Psoas muscle (tissue), 8 donors: ENCODE measurements at regions of chr22 and their contacts with region 1.

Region 1: DNA sequence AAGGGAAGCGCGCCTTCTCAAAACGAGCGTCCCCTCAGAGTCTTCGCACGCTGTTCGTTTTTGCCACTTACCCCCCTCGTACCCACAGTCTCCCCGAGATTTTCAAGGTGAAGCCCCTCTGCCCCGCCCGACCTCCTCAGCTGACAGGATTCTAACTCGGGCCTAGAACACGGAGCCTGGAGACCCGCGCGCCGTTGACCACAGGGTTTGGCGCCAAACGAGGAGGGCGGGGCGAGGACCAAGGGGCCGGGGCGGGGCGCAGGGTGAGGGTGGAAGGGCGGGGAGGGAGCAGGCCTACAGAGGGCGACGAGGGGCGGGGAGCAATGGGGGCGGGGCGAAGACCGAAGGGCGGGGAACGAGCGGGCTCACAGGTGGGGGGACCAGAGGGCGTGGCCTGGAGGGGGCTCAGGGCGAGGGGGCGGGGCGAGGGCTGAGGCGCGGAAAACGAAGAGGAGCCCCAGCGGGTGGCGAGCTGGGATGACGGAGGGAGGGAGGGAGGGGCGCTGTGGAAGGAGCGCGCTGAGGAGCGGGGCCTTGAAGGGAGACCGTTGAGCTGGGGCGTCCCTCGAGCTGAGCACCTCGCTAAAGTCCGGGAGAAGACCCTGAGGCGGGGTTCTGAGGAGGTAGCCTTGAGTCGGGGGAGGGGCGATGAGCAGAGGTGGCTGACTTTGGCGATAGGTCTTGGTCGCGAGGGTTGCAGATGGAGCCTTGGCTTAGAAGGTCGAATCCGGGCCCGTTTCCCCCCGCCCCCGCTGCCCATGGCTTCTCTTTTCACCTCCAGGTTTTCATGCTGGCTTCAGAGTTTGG is at the start of gene DMC1:
- DNase-seq: peak; percentile 94 to 96
- ATAC-seq: peak; percentile 96 to 98 (median 97)
- H3K4me3 ChIP-seq: peak within 1 kb of the TSS; percentile 78
- H3K27ac ChIP-seq: peak within 1 kb of the TSS; percentile 61
- H3K4me1 ChIP-seq: peaks cover 9% of the 10 kb centered on the region
- H3K27me3 ChIP-seq: no peaks in the 10 kb centered on the region
- CTCF ChIP-seq: no peak
- total RNA-seq, gene DMC1: 0.22 to 0.54 (median 0.43) TPM

Region 2: DNA sequence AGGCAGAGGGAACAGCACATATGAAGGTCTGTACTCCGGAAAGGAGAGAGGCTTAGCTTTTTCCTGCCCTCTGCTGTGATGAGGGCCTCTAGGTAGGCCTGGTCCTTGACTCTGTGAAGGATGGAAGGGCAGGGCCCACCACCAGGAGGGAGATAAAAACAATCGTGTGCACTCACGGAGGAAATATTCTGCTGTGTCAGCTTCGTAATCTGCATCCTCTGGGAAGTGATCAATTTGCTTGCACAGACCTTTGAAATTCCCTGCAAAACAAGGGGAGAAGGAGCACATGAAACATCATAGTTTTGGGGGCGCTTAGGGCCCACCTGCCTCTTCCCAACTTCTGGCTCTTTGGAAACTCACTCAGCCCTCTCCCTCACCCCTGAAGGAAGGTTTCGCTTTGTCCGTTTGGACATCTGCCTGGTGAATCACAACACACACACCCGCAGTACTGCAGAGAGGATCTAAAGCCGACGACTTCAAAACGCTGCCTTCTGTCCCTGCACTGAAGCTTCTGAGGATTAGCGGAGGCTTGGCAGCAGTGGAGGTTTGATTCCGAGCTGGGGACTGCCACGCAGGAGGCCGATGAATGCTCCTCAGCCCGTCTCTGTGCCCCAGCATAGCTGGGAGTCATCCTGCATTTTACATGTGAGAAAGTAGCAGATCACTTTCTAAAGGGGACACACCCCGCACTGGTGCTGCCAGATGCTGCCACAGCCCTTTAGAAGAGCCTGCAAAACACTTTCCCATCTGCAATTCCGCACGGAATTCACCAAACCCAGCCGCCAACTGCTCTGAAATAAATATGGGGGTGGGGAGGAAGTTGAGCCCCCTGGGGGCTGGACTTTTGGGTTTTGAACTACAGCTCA is 1982.7 kb before region 1 on chr22:
- intact Hi-C with region 1: no loop called
- DNase-seq: no peak
- ATAC-seq: no peak
- H3K4me3 ChIP-seq: no peak overlapping the region
- H3K27ac ChIP-seq: no peak overlapping the region
- H3K4me1 ChIP-seq: no peaks in the 10 kb centered on the region
- H3K27me3 ChIP-seq: peaks cover 0 to 67% (median 4%) of the 10 kb centered on the region in 3 donors
- CTCF ChIP-seq: no peak

Region 3: DNA sequence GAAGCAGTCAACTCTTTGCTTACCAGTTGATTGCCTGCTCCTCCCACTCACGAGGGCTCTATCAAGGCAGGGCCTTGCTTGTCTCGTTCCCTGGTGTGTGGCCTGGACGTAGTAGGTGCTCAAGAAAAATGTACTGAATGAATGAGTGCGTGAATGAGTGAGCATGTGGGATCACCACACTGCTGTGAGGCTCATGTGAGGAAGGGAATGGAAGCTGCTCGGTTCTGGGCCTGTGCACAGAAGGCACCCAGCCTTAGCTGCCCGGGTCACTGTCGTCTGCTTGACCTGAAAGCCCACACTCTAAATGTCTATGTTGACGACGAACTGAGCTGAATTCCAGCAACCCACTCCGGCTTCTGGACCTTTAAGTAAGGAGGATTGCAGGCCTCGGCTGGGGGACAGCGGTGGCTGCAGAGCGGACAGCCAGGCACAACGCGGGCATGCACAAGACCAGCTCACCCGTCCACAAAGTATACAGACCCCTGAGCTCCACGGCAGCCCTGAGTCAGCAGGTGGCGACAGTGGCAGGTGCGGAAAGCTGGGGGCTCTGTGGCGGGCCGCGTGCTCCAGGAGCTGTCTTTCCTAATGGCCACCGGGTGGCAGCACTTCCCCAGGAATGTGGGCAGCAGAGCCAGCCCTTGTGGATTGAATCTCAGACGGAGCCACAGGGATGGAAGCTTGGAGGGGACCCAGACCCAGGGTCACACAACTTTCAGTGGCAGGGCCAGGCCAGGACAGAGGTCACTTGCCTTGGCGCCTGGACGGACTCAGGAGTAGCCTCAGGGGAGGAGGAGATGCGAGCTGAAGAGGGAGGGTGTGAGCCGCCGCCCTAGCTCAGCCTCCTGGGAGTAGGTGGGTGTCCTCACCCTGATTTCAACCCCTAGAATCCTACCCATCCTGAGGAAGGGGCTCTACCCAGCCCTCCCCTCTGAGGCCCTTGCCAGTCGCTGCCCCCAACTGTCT is 518.0 kb before region 1 on chr22:
- intact Hi-C with region 1: loop called (anchors 5 kb)
- DNase-seq: peak; percentile 77 to 90
- ATAC-seq: peak; percentile 77 to 84 (median 82)
- H3K4me3 ChIP-seq: no peak overlapping the region
- H3K27ac ChIP-seq: no peak overlapping the region
- H3K4me1 ChIP-seq: peaks cover 3% of the 10 kb centered on the region
- H3K27me3 ChIP-seq: no peaks in the 10 kb centered on the region
- CTCF ChIP-seq: peak; percentile 89

Region 4: DNA sequence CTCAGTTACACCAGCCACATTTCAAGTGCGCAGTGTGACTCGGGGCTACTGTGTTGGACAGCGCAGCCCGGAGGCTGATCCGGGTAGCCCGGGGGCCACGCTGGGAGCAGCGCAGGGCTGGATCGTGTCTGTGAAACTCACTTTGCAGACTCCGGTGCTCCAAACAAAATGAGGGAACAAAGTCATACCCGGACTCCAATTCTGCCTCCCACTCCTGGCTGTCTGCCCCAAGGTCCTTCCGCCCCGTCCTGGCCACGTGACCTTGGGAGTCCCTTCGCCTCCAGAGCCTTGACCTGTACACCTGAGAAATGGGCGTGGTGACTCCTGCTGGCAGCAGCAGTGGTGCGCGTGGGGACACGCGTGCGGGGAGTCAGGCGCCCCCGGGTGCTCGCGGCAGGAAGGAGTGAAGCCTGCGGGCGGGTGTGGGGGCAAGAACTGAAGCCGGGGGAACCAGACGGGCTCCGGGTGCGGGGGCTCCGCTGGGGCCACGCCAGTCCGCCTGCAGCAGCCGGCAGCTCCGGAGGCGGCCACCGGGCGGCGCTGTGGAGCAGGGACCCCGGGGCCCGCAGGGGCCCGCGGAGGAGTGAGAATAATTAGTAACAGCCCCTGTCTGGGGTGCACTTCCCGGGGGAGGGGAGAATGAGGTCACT is 157.6 kb before region 1 on chr22:
- intact Hi-C with region 1: loop called (anchors 5 to 10 kb)
- DNase-seq: peak in 1 of 2 donors; percentile 50
- ATAC-seq: peak; percentile 48 to 74 (median 58)
- H3K4me3 ChIP-seq: peak overlapping the region; percentile 50
- H3K27ac ChIP-seq: no peak overlapping the region
- H3K4me1 ChIP-seq: peaks cover 14% of the 10 kb centered on the region
- H3K27me3 ChIP-seq: no peaks in the 10 kb centered on the region
- CTCF ChIP-seq: peak; percentile 64

Region 5: DNA sequence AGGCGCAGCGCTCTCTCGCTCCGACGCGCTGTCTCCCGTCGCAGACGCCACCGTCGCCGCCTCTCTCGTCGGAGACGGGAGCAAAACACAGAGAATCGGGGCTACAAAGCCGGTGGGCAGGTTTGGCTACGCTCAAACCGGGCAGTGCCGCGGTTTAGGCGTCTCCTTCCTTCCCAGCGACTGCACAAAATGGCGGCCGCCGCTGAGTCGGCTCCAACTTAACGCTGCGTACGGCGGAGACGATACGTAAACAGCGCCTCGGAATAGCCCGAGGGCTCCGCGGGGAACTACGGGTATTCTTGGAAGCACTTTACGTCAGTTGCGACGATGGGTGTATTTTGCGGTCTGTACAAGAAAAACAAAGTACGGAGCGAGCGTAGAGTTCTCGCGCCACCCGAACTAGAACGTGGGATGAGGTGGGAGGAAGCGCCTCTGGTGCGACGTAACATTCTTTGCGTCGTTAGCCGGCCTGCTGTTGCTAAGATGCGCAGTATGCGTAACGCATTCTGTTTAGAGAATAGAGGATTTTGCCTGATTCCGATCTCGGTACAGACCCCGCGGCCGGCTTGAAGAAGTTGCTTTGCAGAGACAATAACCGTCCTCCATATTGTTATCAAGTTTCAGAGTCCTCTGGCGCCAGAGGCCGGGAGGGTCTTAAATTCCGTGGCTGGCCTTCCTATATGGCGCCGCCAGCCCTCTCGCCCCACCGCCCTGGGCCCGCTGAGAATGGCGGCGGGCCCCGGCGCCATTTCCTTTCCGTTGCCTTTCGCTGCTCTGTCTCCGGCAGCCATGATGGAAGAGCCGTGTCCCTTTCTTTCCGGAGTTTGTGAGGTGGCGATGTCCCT is 63.8 kb before region 1 on chr22 and contains the start of gene DDX17:
- intact Hi-C with region 1: loop called (anchors 5 kb)
- DNase-seq: peak; percentile 91 to 95
- ATAC-seq: peak; percentile 85 to 89 (median 86)
- H3K4me3 ChIP-seq: peak within 1 kb of the TSS; percentile 87
- H3K27ac ChIP-seq: peak within 1 kb of the TSS; percentile 100
- H3K4me1 ChIP-seq: peaks cover 37% of the 10 kb centered on the region
- H3K27me3 ChIP-seq: no peaks in the 10 kb centered on the region
- CTCF ChIP-seq: no peak
- total RNA-seq, gene DDX17: 127 to 173 (median 150) TPM